ENCODE measurements at regions of chr6 and their contacts with region 1.

Region 1: GRCh38 chr6:75437421-75437891 is 56.1 kb downstream of the FILIP1 start:
- DNase-seq: no peak
- H3K4me3 ChIP-seq: peak overlapping the region in 1 of 2 donors; percentile 18
- H3K27ac ChIP-seq: peak overlapping the region; percentile 52 to 69
- H3K4me1 ChIP-seq: peaks cover 0 to 25% of the 10 kb centered on the region in 2 donors
- H3K27me3 ChIP-seq: no peaks in the 10 kb centered on the region
- CTCF ChIP-seq: no peak

Region 2: DNA sequence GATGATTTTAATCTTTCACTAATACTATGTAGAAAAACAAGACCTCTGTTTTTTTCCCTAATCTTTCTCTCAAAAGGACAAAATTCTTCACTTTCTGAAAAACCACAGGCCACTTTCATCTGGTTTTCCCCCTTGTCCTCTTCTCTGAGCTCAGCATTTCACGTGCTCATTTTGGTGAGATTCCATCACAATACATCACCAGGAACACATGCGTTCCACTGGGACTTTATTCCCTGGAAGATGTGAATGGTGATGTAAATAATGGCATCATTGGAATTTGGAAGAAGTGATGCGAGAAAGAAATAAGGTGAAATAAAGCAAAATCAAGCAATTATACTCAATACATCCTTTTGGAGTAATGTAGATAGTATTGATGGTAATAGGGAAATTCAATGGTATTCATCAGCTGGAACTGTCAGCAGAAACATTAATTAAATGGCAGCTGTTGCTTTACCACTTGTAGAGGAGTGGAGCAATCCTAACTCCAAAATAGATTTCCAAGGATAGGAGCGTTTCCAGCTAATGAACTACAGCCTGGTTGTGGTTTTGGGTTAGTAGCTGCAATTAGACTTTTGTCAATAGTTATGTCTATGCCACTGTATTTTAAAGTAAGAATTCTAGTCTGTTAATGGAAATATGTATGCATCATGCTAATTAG is 44.6 kb after region 1 on chr6:
- intact Hi-C with region 1: loop called (anchors 2 kb)
- DNase-seq: no peak
- H3K4me3 ChIP-seq: no peak overlapping the region
- H3K27ac ChIP-seq: peak overlapping the region; percentile 79 to 82
- H3K4me1 ChIP-seq: peaks cover 3 to 43% of the 10 kb centered on the region in 2 donors
- H3K27me3 ChIP-seq: no peaks in the 10 kb centered on the region
- CTCF ChIP-seq: no peak

Measured in ascending aorta (tissue), 2 donors.